HCT116 (cell line): ENCODE measurements at regions of chr17 and their contacts with region 1.

Region 1: DNA sequence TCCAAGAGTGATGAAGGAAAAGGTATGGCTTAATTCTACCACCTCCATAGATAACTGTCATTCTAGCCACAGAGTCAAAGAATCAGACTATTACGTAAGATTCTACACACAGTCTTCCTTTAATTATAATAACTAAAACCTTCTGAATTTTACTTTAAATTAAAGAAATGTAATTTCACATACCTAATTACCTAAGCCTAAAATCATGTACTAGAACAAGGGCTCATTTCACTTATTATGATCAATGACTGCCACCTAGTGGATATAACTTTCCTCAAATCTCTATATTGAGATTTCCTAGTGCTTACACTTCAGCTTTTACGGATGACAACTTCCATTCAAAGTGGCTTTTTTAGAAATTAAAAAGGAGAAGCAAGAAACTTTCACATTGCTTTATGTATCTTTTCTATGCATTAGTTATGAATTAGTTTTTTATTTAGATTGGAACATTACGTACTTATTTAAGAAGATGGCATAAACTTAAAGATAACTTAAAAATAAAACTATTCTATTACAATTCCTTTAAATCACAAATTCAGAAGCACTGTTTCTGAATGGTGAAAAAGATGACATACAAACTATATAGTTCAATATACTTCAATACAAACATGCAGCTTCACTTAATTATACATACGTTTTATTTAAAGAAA is 18.2 kb upstream of the ABCA10 start:
- DNase-seq: peak; percentile 55
- ATAC-seq: peak; percentile 78
- H3K4me3 ChIP-seq: no peak overlapping the region
- H3K27ac ChIP-seq: no peak overlapping the region
- H3K4me1 ChIP-seq: no peaks in the 10 kb centered on the region
- H3K27me3 ChIP-seq: no peaks in the 10 kb centered on the region
- CTCF ChIP-seq: peak; percentile 53 to 83 (median 65)
- POLR2A ChIP-seq: no peak
- RAD21 ChIP-seq: peak; percentile 79

Region 2: DNA sequence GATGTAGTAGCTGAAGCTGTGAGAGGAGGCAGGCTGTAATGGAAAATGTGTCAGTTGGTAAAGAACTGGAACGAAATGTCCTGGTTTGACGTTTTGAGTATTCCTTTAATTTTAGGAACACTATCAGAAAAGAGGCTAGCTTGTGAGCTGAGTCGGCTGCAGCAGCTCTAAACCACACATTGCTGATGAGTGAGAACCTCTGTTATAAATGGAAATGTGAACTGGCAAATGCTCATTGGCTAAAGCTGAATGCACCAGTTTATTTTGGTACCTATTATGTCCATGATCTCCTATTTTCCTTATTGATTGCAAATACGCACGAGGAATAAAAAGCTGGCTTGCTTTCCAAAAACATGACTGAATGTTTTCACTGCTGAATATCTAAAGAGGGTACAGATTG is 778.5 kb before region 1 on chr17:
- CTCF ChIA-PET with region 1: no interaction called
- POLR2A ChIA-PET with region 1: no interaction called
- RAD21 ChIA-PET with region 1: no interaction called
- intact Hi-C with region 1: loop called (anchors 5 kb)
- DNase-seq: no peak
- ATAC-seq: no peak
- H3K4me3 ChIP-seq: no peak overlapping the region
- H3K27ac ChIP-seq: no peak overlapping the region
- H3K4me1 ChIP-seq: peaks cover 3 to 8% of the 10 kb centered on the region in 2 experiments; a peak in 3 of 4 replicates
- H3K27me3 ChIP-seq: no peaks in the 10 kb centered on the region
- CTCF ChIP-seq: no peak
- POLR2A ChIP-seq: no peak
- RAD21 ChIP-seq: no peak

Region 3: GRCh38 chr17:68539548-68540467 is 707.0 kb before region 1 on chr17:
- CTCF ChIA-PET with region 1: no interaction called
- POLR2A ChIA-PET with region 1: no interaction called
- RAD21 ChIA-PET with region 1: no interaction called
- intact Hi-C with region 1: loop called (anchors 10 kb)
- DNase-seq: no peak
- ATAC-seq: peak; percentile 24; the same call in 1 of the 2 replicates
- H3K4me3 ChIP-seq: no peak overlapping the region
- H3K27ac ChIP-seq: no peak overlapping the region
- H3K4me1 ChIP-seq: no peaks in the 10 kb centered on the region
- H3K27me3 ChIP-seq: no peaks in the 10 kb centered on the region
- CTCF ChIP-seq: no peak
- POLR2A ChIP-seq: no peak
- RAD21 ChIP-seq: 0 out of 2 replicates have a peak, but pooled peaks have one; percentile 4

Region 4: DNA sequence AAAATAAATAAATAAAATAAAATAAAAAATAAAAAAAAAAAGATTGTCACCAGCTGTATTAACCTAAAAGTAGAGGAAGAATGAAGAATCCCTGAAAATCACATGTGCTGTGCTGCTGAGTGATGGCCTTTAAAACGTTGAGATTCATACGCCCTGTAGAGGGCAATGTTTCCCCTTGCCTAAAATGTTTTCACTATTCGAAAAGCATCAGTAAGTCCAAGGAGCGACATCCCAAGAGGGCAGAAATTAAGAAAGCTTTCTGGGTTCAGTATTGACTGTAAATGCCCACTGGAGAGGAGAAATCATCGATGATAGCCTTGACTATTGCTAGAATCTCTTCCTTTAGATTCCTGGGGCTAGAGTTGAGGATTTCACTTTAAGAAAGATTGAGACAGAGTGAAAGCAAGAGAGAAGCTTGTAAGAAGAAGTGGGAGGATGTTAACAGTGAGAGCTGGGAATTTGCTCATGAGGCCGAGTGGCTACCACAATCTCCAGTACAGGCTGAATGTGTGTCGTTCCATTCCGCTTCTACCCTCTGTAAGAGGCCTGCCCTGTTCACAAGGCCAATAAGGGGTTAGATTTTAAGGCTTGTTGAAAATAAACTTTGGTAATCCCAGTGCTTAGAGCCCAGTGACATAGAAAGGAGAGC is 474.9 kb before region 1 on chr17:
- CTCF ChIA-PET with region 1: interaction called, 63 read pairs
- POLR2A ChIA-PET with region 1: no interaction called
- RAD21 ChIA-PET with region 1: interaction called, 3 to 4 read pairs
- intact Hi-C with region 1: loop called (anchors 1 kb)
- DNase-seq: peak; percentile 62
- ATAC-seq: peak; percentile 67
- H3K4me3 ChIP-seq: peak overlapping the region; percentile 4 to 10; a peak in 1 of 4 replicates
- H3K27ac ChIP-seq: no peak overlapping the region
- H3K4me1 ChIP-seq: peaks cover 4 to 9% of the 10 kb centered on the region in 2 experiments; a peak in 3 of 4 replicates
- H3K27me3 ChIP-seq: no peaks in the 10 kb centered on the region
- CTCF ChIP-seq: peak; percentile 65 to 84 (median 78)
- POLR2A ChIP-seq: no peak
- RAD21 ChIP-seq: peak; percentile 77

Region 5: DNA sequence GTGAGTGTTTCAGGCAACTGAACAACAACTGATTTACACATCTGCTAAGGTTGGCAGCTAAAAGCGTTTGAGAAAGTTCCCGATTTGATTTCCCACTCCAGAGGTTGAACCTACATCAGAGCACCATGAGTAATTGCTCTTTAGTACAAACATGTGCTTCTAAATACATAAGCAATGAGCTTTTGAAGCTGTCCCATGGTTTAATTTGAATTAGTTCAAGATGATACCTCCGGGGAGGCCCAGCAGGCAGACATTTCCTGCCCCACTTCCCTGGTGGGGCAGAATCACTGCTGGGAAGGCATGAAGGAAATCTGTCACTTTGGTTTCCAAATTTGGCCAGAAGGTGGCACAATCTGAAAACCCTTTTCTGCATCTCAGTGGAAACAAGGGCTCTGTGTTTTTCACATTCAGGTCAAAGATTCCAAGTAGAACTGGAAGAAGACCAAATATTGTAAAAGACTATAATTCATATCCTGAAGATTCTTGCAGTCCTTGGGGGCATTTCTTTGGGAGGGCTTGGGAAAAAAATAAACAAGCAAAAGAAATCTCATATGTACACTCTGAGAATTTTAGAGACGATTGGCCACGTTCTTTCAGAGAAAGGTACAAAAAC is 469.5 kb before region 1 on chr17:
- CTCF ChIA-PET with region 1: interaction called, 63 read pairs
- POLR2A ChIA-PET with region 1: no interaction called
- RAD21 ChIA-PET with region 1: interaction called, 3 to 4 read pairs
- intact Hi-C with region 1: loop called (anchors 1 kb)
- DNase-seq: peak; percentile 51
- ATAC-seq: peak; percentile 46
- H3K4me3 ChIP-seq: no peak overlapping the region
- H3K27ac ChIP-seq: no peak overlapping the region
- H3K4me1 ChIP-seq: peaks cover 4 to 9% of the 10 kb centered on the region in 2 experiments; a peak in 3 of 4 replicates
- H3K27me3 ChIP-seq: no peaks in the 10 kb centered on the region
- CTCF ChIP-seq: peak; percentile 77 to 95 (median 87)
- POLR2A ChIP-seq: no peak
- RAD21 ChIP-seq: peak; percentile 94

Region 6: GRCh38 chr17:69235338-69235930 is 11.4 kb before region 1 on chr17:
- CTCF ChIA-PET with region 1: interaction called, 20 read pairs
- POLR2A ChIA-PET with region 1: no interaction called
- RAD21 ChIA-PET with region 1: interaction called in 1 of 2 experiments, 3 read pairs
- intact Hi-C with region 1: no loop called
- DNase-seq: peak; percentile 89
- ATAC-seq: peak; percentile 99
- H3K4me3 ChIP-seq: no peak overlapping the region
- H3K27ac ChIP-seq: no peak overlapping the region
- H3K4me1 ChIP-seq: 0 out of 4 replicates have a peak, but pooled peaks cover 0 to 3% of the 10 kb centered on the region in 2 experiments
- H3K27me3 ChIP-seq: no peaks in the 10 kb centered on the region
- CTCF ChIP-seq: peak; percentile 82 to 97 (median 97)
- POLR2A ChIP-seq: no peak
- RAD21 ChIP-seq: peak; percentile 98

Region 7: GRCh38 chr17:69287168-69287567 is 40.3 kb after region 1 on chr17:
- CTCF ChIA-PET with region 1: no interaction called
- POLR2A ChIA-PET with region 1: no interaction called
- RAD21 ChIA-PET with region 1: no interaction called
- intact Hi-C with region 1: no loop called
- DNase-seq: peak; percentile 16
- ATAC-seq: peak; percentile 49; the same call in 1 of the 2 replicates
- H3K4me3 ChIP-seq: no peak overlapping the region
- H3K27ac ChIP-seq: no peak overlapping the region
- H3K4me1 ChIP-seq: peaks cover 0 to 6% of the 10 kb centered on the region in 2 experiments; a peak in 2 of 4 replicates
- H3K27me3 ChIP-seq: no peaks in the 10 kb centered on the region
- CTCF ChIP-seq: no peak
- POLR2A ChIP-seq: no peak
- RAD21 ChIP-seq: no peak